Dorsolateral prefrontal cortex (tissue), 120 donors: ENCODE measurements at regions of chr11 and their contacts with region 1.

Region 1: GRCh38 chr11:11884774-11885481 is 43.2 kb downstream of the USP47 start:
- DNase-seq: no peak
- H3K4me3 ChIP-seq: no peak overlapping the region
- H3K27ac ChIP-seq: no peak overlapping the region
- H3K27me3 ChIP-seq: no peaks in the 10 kb centered on the region
- CTCF ChIP-seq: no peak

Region 2: DNA sequence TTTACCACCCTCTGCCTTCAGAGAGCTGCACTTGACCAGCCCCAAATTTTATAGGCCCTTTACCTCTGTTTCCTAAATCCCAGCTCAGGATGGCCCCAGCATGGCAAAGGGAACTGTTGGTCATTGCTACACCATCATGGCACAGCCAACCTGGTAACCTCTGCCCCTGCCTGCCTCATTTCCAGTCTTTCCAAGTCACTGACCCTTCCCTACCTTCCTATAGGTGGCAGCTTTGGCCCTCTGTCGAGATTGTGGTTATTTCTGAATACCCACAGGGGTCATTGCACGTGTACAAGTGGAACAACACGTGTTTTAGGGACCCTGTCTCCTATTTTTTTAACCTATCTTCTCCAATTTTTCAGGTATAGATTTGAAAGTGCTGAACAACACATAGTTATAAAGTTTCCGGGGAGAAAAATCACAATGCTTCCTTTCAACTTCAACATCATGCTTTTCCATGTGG is 265.9 kb before region 1 on chr11:
- intact Hi-C with region 1: no loop called
- DNase-seq: no peak
- H3K4me3 ChIP-seq: peak overlapping the region in 55 of 59 donors; percentile 17 to 96 (median 82)
- H3K27ac ChIP-seq: peak overlapping the region in 5 of 59 donors; percentile 5 to 83 (median 18)
- H3K27me3 ChIP-seq: no peaks in the 10 kb centered on the region
- CTCF ChIP-seq: peak in 39 of 56 donors; percentile 12 to 54 (median 29)

Region 3: DNA sequence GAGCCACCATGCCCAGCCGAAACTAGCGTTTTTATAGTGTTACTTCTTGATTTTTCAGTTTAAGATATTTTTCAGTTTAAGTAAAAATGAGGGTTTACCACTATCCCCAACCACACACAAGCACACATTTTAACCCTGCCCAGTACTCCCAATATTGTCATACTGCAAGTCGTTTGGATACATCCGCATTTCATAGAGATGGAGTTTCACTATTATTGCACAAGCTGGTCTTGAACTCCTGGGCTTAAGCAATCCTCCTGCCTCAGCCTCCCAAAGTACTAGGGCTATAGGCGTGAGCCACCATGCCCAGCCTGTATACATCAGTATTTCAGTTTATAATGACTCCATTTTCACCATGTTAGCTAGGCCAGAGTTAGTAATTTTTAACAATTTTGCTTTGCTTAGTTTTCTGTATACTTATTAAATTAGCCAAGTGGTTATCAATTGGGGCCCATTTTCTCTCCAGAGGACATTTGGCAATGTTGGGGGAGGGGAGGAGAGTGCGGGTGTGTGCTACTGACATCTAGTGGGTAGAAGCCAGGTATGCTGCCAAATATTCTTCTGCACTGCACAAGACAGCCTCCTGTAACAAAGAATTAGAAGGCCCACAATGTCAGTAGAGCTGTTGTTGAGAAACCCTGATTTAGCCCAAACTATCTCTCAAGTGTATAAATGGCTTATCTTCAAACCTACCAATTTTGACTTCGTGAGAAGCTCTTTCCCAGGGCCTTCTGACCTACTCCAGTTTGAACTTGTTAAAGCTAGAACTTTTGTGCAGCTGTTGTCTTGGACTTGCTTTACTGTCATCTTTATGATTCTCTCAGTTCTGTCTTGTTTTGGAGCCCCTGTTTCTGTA is 35.8 kb before region 1 on chr11:
- intact Hi-C with region 1: loop called in 1 of 2 experiments (anchors 5 kb)
- DNase-seq: peak in 6 of 10 donors; percentile 17 to 58 (median 42)
- H3K4me3 ChIP-seq: peak overlapping the region in 1 of 59 donors; percentile 3
- H3K27ac ChIP-seq: peak overlapping the region in 34 of 59 donors; percentile 0 to 70 (median 26)
- H3K27me3 ChIP-seq: no peaks in the 10 kb centered on the region
- CTCF ChIP-seq: peak in 55 of 56 donors; percentile 35 to 77 (median 56)

Region 4: GRCh38 chr11:11909727-11910126 is 24.8 kb after region 1 on chr11:
- intact Hi-C with region 1: no loop called
- DNase-seq: no peak
- H3K4me3 ChIP-seq: no peak overlapping the region
- H3K27ac ChIP-seq: no peak overlapping the region
- H3K27me3 ChIP-seq: no peaks in the 10 kb centered on the region
- CTCF ChIP-seq: no peak

Region 5: GRCh38 chr11:12053606-12054361 is 168.9 kb after region 1 on chr11:
- intact Hi-C with region 1: no loop called
- DNase-seq: no peak
- H3K4me3 ChIP-seq: no peak overlapping the region
- H3K27ac ChIP-seq: peak overlapping the region in 5 of 59 donors; percentile 5 to 61 (median 25)
- H3K27me3 ChIP-seq: no peaks in the 10 kb centered on the region
- CTCF ChIP-seq: no peak